Pancreas (tissue), 10 donors: ENCODE measurements at regions of chr2 and their contacts with region 1.

Region 1: DNA sequence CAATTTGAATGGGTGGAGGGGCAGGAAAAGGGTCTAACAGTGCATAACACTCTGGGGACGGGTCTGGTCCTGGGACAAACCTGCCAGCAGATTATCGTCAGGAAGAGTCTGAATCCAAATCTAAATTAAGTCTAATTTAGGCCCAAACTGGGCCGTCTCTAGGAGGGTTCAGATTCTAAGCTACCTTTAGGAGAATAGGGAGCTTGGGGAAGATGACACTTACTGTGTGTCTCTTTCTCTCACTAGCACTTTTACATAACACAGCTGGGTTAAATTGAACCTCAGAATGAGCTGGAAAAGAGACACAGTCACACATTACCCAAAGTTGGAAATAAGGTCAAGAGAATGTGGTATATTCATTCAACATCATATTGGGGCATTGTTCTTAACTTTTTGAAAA is 228.8 kb downstream of the KCNH7 start:
- DNase-seq: no peak
- ATAC-seq: no peak
- H3K4me3 ChIP-seq: no peak overlapping the region
- H3K27ac ChIP-seq: no peak overlapping the region
- H3K4me1 ChIP-seq: peaks cover 0 to 4% (median 0%) of the 10 kb centered on the region in 3 donors
- H3K27me3 ChIP-seq: no peaks in the 10 kb centered on the region
- CTCF ChIP-seq: no peak

Region 2: GRCh38 chr2:162661618-162662017 is 51.8 kb after region 1 on chr2:
- intact Hi-C with region 1: loop called in 1 of 3 experiments (anchors 10 kb)
- DNase-seq: no peak
- ATAC-seq: no peak
- H3K4me3 ChIP-seq: no peak overlapping the region
- H3K27ac ChIP-seq: no peak overlapping the region
- H3K4me1 ChIP-seq: no peaks in the 10 kb centered on the region
- H3K27me3 ChIP-seq: no peaks in the 10 kb centered on the region
- CTCF ChIP-seq: no peak